Ascending aorta (tissue), 2 donors: ENCODE measurements at regions of chr3 and their contacts with region 1.

Region 1: GRCh38 chr3:111668912-111669488 is 73.9 kb upstream of the ZBED2 start:
- DNase-seq: no peak
- H3K4me3 ChIP-seq: no peak overlapping the region
- H3K27ac ChIP-seq: peak overlapping the region in 1 of 2 donors; percentile 5
- H3K4me1 ChIP-seq: no peaks in the 10 kb centered on the region
- H3K27me3 ChIP-seq: no peaks in the 10 kb centered on the region
- CTCF ChIP-seq: peak; percentile 68 to 84 (median 71)

Region 2: DNA sequence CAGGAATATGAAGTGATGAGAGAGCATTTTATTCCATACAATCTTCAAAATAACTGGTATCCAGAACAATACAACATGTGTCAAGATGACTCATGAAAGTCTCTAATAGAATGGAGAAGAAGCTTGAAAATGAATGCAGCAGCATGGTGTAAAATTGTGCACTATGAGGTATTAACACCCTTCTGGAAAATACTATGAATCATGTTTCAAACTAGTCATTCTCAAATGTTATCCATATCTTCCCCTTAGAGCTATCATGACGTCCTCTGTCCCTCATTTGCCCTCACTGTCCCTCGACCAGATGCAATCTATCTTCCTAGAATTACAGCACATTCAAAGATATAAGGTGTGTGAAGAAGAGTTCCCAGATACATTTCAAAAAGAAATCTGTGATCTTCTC is 399.2 kb before region 1 on chr3:
- intact Hi-C with region 1: no loop called
- DNase-seq: no peak
- H3K4me3 ChIP-seq: no peak overlapping the region
- H3K27ac ChIP-seq: no peak overlapping the region
- H3K4me1 ChIP-seq: no peaks in the 10 kb centered on the region
- H3K27me3 ChIP-seq: no peaks in the 10 kb centered on the region
- CTCF ChIP-seq: no peak

Region 3: DNA sequence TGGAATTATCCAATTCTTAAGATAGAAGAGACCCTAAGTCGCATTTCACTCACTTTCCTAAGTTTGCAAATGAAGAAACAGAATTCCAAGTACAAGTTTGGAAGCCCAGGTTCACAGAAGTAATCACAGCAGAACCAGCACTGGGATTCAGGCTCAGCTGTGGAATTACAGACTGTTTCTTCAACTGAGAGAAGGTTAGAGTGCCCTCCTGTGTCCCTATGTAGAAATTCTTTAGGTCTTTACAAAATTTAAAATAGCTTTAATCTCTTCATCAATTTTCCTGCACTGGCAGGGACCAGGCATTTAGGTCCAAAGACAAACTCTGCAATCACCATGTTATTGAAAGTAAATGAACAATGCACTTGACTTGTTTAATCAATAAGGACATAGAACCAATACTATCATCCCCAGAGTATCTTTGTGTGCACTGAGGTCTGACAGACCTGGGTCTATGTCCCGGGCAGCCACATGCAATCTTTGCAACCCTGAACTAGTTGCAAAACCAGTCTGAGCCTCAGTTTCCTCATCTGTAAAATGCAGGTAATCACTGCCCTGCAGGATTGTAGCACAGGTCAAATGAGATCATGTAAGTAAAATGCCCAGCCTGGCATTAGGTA is 22.4 kb after region 1 on chr3:
- intact Hi-C with region 1: loop called (anchors 2 kb)
- DNase-seq: no peak
- H3K4me3 ChIP-seq: no peak overlapping the region
- H3K27ac ChIP-seq: no peak overlapping the region
- H3K4me1 ChIP-seq: no peaks in the 10 kb centered on the region
- H3K27me3 ChIP-seq: no peaks in the 10 kb centered on the region
- CTCF ChIP-seq: peak; percentile 5 to 42 (median 7)

Region 4: DNA sequence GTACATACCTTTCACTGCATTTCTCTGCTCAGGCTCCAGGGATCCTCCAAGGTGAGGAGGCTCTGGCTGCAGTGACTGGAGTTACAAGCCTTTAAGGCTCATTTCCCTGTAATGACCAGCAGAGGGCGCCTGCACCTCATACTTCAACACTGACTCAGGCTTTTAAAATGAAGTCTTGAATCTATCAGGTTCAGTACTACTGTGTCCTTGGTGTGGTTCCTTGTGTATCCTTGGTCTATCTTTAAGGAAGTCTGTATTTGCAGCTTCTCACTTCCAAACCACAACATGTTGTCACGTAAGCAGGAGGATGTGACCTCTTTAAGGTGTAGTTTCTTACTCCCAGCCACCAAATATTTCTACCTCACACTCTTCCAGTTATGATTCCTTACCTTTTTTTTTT is 48.6 kb after region 1 on chr3:
- intact Hi-C with region 1: loop called (anchors 2 kb)
- DNase-seq: peak in 1 of 2 donors; percentile 92
- H3K4me3 ChIP-seq: no peak overlapping the region
- H3K27ac ChIP-seq: no peak overlapping the region
- H3K4me1 ChIP-seq: peaks cover 3% of the 10 kb centered on the region in 2 donors
- H3K27me3 ChIP-seq: no peaks in the 10 kb centered on the region
- CTCF ChIP-seq: peak; percentile 89 to 95 (median 92)

Region 5: GRCh38 chr3:111967651-111968274 is 298.8 kb after region 1 on chr3:
- intact Hi-C with region 1: loop called (anchors 1 kb)
- DNase-seq: peak; percentile 41 to 94
- H3K4me3 ChIP-seq: no peak overlapping the region
- H3K27ac ChIP-seq: peak overlapping the region in 1 of 2 donors; percentile 37
- H3K4me1 ChIP-seq: peaks cover 0 to 6% of the 10 kb centered on the region in 2 donors
- H3K27me3 ChIP-seq: no peaks in the 10 kb centered on the region
- CTCF ChIP-seq: peak; percentile 77 to 88 (median 80)

Region 6: GRCh38 chr3:112013058-112013783 is 344.2 kb after region 1 on chr3:
- intact Hi-C with region 1: loop called (anchors 2 kb)
- DNase-seq: peak in 1 of 2 donors; percentile 79
- H3K4me3 ChIP-seq: peak overlapping the region in 1 of 2 donors; percentile 33
- H3K27ac ChIP-seq: no peak overlapping the region
- H3K4me1 ChIP-seq: peaks cover 0 to 2% of the 10 kb centered on the region in 2 donors
- H3K27me3 ChIP-seq: no peaks in the 10 kb centered on the region
- CTCF ChIP-seq: peak; percentile 47 to 84 (median 65)

Region 7: GRCh38 chr3:112043603-112044201 is 374.7 kb after region 1 on chr3:
- intact Hi-C with region 1: no loop called
- DNase-seq: peak in 1 of 2 donors; percentile 64
- H3K4me3 ChIP-seq: peak overlapping the region; percentile 8 to 19
- H3K27ac ChIP-seq: no peak overlapping the region
- H3K4me1 ChIP-seq: peaks cover 0 to 2% of the 10 kb centered on the region in 2 donors
- H3K27me3 ChIP-seq: no peaks in the 10 kb centered on the region
- CTCF ChIP-seq: peak; percentile 48 to 83 (median 76)